Uterus (tissue), 4 donors: ENCODE measurements at regions of chr20 and their contacts with region 1.

Region 1: DNA sequence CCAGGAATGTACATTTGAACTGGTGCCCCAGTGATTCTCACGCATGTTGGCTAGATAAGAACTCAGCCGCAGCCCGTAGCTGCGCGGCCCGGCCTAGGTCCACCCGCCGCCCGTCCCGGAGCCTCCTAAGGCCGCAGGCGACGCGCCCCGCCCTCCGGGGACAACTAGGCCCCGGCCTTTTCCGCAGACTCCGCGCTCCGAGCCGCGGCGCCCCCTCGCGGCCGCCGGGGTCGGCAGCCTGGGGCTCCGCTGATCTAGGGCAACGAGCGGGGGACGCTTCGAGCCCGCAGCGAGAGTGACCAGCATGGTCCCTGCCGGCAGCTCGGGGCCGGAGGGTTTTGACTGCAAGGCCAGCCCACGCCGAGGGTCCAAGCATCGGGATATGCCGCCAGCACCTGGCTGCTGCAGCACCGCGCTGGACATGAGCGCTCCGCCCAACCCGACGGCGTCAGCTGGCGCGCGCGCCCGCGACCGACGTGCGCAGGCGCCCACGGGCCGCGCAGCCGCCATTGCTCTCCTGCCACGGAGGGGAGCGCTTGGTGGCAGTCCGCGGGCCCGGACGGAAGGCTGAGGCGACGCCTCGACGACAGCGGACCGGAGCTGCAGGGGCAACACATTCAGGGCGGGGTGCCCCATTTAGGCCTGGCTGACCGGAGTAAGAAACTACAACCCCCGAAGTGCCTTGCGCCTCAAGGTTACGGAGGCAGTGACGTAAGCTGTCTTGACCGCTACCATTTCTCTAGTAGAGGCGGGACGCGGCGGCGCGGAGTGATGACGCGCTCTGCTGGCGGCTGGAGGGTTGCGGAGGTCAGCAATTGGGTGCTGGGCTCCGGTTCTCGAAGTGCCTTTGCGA is at the start of gene AP5S1:
- DNase-seq: peak; percentile 97 to 98
- H3K4me3 ChIP-seq: peak within 1 kb of the TSS; percentile 72 to 75
- H3K27ac ChIP-seq: peak within 1 kb of the TSS; percentile 98
- H3K4me1 ChIP-seq: peaks cover 0 to 4% of the 10 kb centered on the region in 2 donors
- H3K27me3 ChIP-seq: no peaks in the 10 kb centered on the region
- CTCF ChIP-seq: peak; percentile 98 to 100 (median 100)
- POLR2A ChIP-seq: peak in 1 of 2 donors; percentile 79
- total RNA-seq, gene AP5S1: under 0.01 to 18.6 (median 9.5) TPM

Region 2: GRCh38 chr20:3767427-3768341 is 52.6 kb before region 1 on chr20 and contains the start of gene ADISSP:
- intact Hi-C with region 1: no loop called
- DNase-seq: peak; percentile 98 to 99
- H3K4me3 ChIP-seq: peak within 1 kb of the TSS; percentile 59 to 82
- H3K27ac ChIP-seq: peak within 1 kb of the TSS; percentile 86 to 92
- H3K4me1 ChIP-seq: peaks cover 0 to 11% of the 10 kb centered on the region in 2 donors
- H3K27me3 ChIP-seq: no peaks in the 10 kb centered on the region
- CTCF ChIP-seq: peak in 1 of 4 experiments; percentile 37
- POLR2A ChIP-seq: peak; percentile 47 to 75
- total RNA-seq, gene ADISSP: 4.1 to 45.9 (median 34.8) TPM

Region 3: DNA sequence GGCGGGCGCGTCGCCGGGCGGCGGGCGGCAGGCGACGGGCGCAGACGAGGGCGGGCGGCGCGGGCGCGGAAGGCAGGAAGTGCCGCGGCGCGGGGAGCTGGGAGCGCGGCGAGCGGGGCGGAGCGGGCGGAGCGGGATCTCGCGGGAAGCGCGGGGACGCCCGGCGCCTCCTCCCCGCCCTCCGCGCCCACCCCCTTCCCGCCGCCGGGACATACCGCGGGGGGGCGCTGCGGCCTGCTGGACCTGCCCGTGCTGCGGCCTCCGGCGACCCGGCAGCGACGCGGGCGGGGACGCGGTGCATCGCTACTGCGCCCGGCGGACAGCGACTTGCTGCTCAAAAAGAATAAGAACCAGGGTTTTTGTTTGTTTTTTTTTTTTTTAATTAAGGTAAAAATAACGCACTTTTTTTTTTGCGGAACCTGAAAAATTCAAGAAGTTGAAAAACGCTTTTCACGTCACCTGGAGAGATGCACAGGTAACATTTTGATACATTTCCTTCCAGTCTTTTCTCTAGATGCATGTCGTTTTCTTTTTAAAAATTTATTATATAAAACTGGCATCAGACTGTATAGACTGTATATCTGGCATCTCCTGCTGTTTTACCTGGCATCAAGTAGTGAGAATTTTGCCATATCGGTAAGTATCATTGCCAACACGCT is 33.5 kb before region 1 on chr20 and contains the start of gene CENPB:
- intact Hi-C with region 1: loop called (anchors 5 kb)
- DNase-seq: peak; percentile 84 to 92
- H3K4me3 ChIP-seq: peak within 1 kb of the TSS; percentile 26 to 69
- H3K27ac ChIP-seq: peak within 1 kb of the TSS; percentile 84 to 85
- H3K4me1 ChIP-seq: peaks cover 4 to 18% of the 10 kb centered on the region in 2 donors
- H3K27me3 ChIP-seq: no peaks in the 10 kb centered on the region
- CTCF ChIP-seq: peak; percentile 61 to 96 (median 89)
- POLR2A ChIP-seq: peak in 1 of 2 donors; percentile 34
- total RNA-seq, gene CENPB: 18.2 to 127 (median 85.2) TPM

Region 4: GRCh38 chr20:3885715-3886114 is 65.4 kb after region 1 on chr20:
- intact Hi-C with region 1: no loop called
- DNase-seq: no peak
- H3K4me3 ChIP-seq: no peak overlapping the region
- H3K27ac ChIP-seq: no peak overlapping the region
- H3K4me1 ChIP-seq: peaks cover 0 to 7% of the 10 kb centered on the region in 2 donors
- H3K27me3 ChIP-seq: no peaks in the 10 kb centered on the region
- CTCF ChIP-seq: no peak
- POLR2A ChIP-seq: no peak

Region 5: GRCh38 chr20:3911956-3912355 is 91.7 kb after region 1 on chr20:
- intact Hi-C with region 1: no loop called
- DNase-seq: no peak
- H3K4me3 ChIP-seq: no peak overlapping the region
- H3K27ac ChIP-seq: no peak overlapping the region
- H3K4me1 ChIP-seq: no peaks in the 10 kb centered on the region
- H3K27me3 ChIP-seq: no peaks in the 10 kb centered on the region
- CTCF ChIP-seq: no peak
- POLR2A ChIP-seq: no peak